ENCODE measurements at regions of chr6 and their contacts with region 1.

Region 1: GRCh38 chr6:99933129-99933528 is 60.9 kb downstream of the MCHR2 start:
- DNase-seq: no peak
- H3K4me3 ChIP-seq: no peak overlapping the region
- H3K27ac ChIP-seq: no peak overlapping the region
- H3K4me1 ChIP-seq: no peaks in the 10 kb centered on the region
- H3K27me3 ChIP-seq: no peaks in the 10 kb centered on the region
- CTCF ChIP-seq: no peak

Region 2: GRCh38 chr6:100057941-100058340 is 124.8 kb after region 1 on chr6:
- intact Hi-C with region 1: no loop called
- DNase-seq: no peak
- H3K4me3 ChIP-seq: no peak overlapping the region
- H3K27ac ChIP-seq: no peak overlapping the region
- H3K4me1 ChIP-seq: no peaks in the 10 kb centered on the region
- H3K27me3 ChIP-seq: no peaks in the 10 kb centered on the region
- CTCF ChIP-seq: no peak

Region 3: DNA sequence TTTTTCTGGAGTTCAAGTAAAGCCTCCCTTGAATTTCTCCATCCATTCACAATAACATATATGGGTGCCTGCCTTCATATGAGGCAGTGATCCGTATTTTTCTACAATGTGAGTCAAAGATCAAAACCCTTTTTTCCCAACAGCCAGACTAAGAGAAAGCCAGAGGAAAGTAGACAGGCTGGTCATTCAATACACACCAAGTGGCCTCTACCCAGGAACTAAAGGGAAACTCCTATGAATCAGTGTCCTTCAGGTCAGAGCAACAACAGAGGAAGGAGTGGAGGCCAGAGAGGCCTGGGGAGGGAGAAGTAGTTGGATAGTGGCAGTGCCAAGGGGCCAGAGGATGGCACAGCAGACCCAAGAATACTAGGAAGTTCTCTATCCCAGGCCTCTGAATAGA is 507.8 kb after region 1 on chr6:
- intact Hi-C with region 1: loop called (anchors 5 kb)
- DNase-seq: no peak
- H3K4me3 ChIP-seq: no peak overlapping the region
- H3K27ac ChIP-seq: no peak overlapping the region
- H3K4me1 ChIP-seq: no peaks in the 10 kb centered on the region
- H3K27me3 ChIP-seq: no peaks in the 10 kb centered on the region
- CTCF ChIP-seq: no peak

Measured in ascending aorta (tissue), 2 donors.